CD4-positive, alpha-beta memory T cell (primary cell): ENCODE measurements at regions of chr11 and their contacts with region 1.

Region 1: DNA sequence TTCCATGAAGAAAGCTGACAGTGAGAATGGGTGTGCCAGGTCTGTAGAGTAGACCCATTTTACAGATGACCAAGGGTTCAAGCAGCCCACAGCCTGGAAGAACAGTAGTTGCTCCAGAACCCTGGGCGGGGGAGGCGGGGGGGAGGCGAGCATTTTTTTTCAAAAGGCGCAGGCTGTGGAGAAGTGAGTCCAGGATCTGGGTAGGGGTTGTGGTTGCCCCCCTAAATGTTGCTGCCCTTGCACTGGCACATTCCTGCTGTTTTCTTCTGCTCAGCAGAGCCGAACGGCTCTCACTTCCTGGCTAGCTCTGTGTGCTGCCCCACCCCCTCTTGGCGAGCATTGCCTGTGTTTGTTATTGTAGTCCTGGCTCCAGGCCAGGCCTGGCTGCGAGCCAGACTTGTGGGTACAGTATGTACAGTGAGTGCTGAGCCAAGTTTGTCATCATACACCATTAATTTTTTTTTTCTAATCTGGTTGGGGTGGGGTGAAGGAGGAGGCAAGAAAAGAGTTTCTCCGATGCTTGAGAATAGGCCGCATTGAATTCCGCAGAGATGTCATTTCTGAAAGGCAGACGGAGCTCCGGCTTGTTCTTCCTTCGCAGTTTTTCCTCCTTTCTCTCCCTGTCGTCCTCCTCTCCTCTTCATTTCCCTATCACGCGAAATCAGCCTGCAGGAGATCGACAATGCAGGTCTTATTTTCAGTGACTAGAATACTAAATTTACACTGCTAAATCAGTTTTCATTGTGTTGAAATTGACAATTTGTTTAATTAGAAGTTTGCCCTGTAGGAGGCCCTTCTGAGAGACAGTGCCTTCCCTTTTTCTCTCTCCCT is 100.5 kb downstream of the ZBTB16 start:
- DNase-seq: peak; percentile 97 to 98 (median 98)
- H3K4me3 ChIP-seq: peak overlapping the region in 1 of 2 donors; percentile 26
- H3K4me3 Mint-ChIP-seq: peak overlapping the region; percentile 53 to 86 (median 82)
- H3K27ac ChIP-seq: peak overlapping the region; percentile 33
- H3K27ac Mint-ChIP-seq: peak overlapping the region; percentile 90 to 96 (median 95)
- H3K4me1 ChIP-seq: peaks cover 59% of the 10 kb centered on the region
- H3K4me1 Mint-ChIP-seq: peaks cover 57 to 89% (median 76%) of the 10 kb centered on the region in 4 donors
- H3K27me3 ChIP-seq: no peaks in the 10 kb centered on the region
- H3K27me3 Mint-ChIP-seq: no peaks in the 10 kb centered on the region

Region 2: GRCh38 chr11:113314389-113315301 is 845.4 kb before region 1 on chr11 and contains the start of gene TTC12:
- CTCF ChIA-PET with region 1: no interaction called
- POLR2A ChIA-PET with region 1: no interaction called
- intact Hi-C with region 1: loop called (anchors 10 kb)
- DNase-seq: peak; percentile 87 to 91 (median 89)
- H3K4me3 ChIP-seq: peak within 1 kb of the TSS; percentile 24 to 84
- H3K4me3 Mint-ChIP-seq: peak within 1 kb of the TSS; percentile 79 to 91 (median 88)
- H3K27ac ChIP-seq: peak within 1 kb of the TSS; percentile 85
- H3K27ac Mint-ChIP-seq: peak within 1 kb of the TSS; percentile 79 to 95 (median 94)
- H3K4me1 ChIP-seq: peaks cover 20% of the 10 kb centered on the region
- H3K4me1 Mint-ChIP-seq: peaks cover 27 to 52% (median 38%) of the 10 kb centered on the region in 4 donors
- H3K27me3 ChIP-seq: no peaks in the 10 kb centered on the region
- H3K27me3 Mint-ChIP-seq: no peaks in the 10 kb centered on the region
- total RNA-seq, gene TTC12: 69.2 to 75.1 TPM

Region 3: GRCh38 chr11:113994077-113994954 is 165.7 kb before region 1 on chr11:
- CTCF ChIA-PET with region 1: interaction called, 15 read pairs
- POLR2A ChIA-PET with region 1: no interaction called
- intact Hi-C with region 1: no loop called
- DNase-seq: peak in 4 of 5 donors; percentile 18 to 33 (median 22)
- H3K4me3 ChIP-seq: no peak overlapping the region
- H3K4me3 Mint-ChIP-seq: no peak overlapping the region
- H3K27ac ChIP-seq: no peak overlapping the region
- H3K27ac Mint-ChIP-seq: no peak overlapping the region
- H3K4me1 ChIP-seq: no peaks in the 10 kb centered on the region
- H3K4me1 Mint-ChIP-seq: peaks cover 0 to 1% (median 0%) of the 10 kb centered on the region in 4 donors
- H3K27me3 ChIP-seq: no peaks in the 10 kb centered on the region
- H3K27me3 Mint-ChIP-seq: peaks cover 6 to 13% of the 10 kb centered on the region in 2 donors

Region 4: DNA sequence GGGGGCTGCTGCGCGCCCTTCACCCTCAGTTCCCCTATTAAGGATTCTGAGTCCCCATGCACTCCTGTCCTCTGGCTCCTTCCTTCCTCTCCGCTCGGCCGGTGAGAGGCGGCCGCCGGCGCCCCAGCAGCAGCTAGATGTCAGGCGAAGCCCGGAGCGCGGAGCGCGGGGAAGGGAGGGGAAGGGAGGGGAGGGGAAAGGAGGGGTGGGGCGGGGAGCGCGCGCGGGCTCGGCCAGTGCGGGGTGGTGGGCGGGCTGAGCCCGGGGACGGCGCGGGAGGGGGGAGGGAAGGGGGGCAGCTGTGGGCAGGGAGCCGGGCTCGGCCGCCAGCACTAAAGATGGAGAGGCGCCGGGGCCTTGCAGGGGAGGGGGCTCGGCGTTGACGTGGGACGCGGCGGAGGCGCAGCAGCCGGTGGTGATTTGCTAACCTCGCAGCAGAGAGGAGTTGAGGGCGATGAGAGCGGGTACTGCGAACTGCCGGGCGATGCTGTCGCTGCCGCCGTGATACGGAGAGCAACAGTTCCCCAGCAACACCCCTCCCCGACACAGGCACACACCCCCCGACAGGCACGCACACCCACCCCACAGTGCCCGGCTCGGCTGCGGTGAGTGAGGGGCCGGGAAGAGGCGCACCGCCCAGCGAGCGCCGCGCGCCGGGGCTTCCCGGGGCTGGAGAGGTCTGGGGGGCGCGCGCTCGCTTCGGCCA is 100.6 kb before region 1 on chr11 and contains the start of gene ZBTB16:
- CTCF ChIA-PET with region 1: interaction called, 4 read pairs
- POLR2A ChIA-PET with region 1: interaction called, 25 read pairs
- intact Hi-C with region 1: loop called (anchors 1 kb)
- DNase-seq: peak; percentile 59 to 76 (median 67)
- H3K4me3 ChIP-seq: peak within 1 kb of the TSS; percentile 52 to 57
- H3K4me3 Mint-ChIP-seq: peak within 1 kb of the TSS; percentile 87 to 97 (median 92)
- H3K27ac ChIP-seq: peak within 1 kb of the TSS; percentile 43
- H3K27ac Mint-ChIP-seq: peak within 1 kb of the TSS; percentile 55 to 91 (median 85)
- H3K4me1 ChIP-seq: peaks cover 17% of the 10 kb centered on the region
- H3K4me1 Mint-ChIP-seq: peaks cover 5 to 34% (median 16%) of the 10 kb centered on the region in 4 donors
- H3K27me3 ChIP-seq: peaks cover 16% of the 10 kb centered on the region
- H3K27me3 Mint-ChIP-seq: peaks cover 1 to 8% of the 10 kb centered on the region in 2 donors
- total RNA-seq, gene ZBTB16: 5.6 to 8.2 TPM

Region 5: DNA sequence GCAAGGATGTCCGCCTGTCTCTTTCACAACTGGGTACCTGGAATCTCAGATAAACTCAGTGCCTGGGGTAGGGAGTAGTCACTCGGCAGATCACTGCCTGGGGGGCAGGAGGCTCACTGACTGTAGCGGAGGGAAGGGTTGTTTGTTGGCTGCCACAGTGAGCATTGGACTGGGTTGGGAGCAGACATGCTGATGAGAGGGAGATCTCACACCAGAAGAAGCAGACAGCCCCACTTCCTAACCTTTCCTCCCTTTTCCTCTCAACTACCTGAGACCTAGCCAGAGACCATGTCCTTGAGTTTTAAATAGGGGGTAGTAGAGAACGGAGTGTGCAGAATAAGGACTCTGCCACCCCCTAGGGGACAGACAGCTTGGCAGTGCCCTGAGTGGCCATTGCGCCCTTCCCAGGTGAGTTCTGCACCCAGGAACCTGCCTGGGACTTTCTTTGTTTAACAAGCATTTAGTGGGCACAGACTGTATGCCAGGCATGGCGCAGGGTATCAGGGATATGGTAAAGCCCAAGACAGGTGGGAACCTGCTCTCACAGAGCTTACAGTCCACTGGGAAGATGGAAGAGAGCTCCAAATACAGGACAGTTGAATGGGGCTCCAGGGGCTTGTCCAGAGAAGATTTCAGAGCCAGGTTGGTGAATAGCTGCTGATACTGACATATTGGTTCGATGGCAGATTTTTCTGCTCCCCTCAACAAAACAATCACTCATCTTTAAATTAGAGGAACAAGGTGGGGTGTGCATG is 20.5 kb after region 1 on chr11:
- CTCF ChIA-PET with region 1: interaction called, 106 read pairs
- POLR2A ChIA-PET with region 1: interaction called, 222 read pairs
- intact Hi-C with region 1: loop called (anchors 1 kb)
- DNase-seq: no peak
- H3K4me3 ChIP-seq: no peak overlapping the region
- H3K4me3 Mint-ChIP-seq: peak overlapping the region in 6 of 8 donors; percentile 17 to 60 (median 42)
- H3K27ac ChIP-seq: no peak overlapping the region
- H3K27ac Mint-ChIP-seq: peak overlapping the region in 3 of 7 donors; percentile 53 to 90 (median 79)
- H3K4me1 ChIP-seq: peaks cover 70% of the 10 kb centered on the region
- H3K4me1 Mint-ChIP-seq: peaks cover 60 to 92% (median 77%) of the 10 kb centered on the region in 4 donors
- H3K27me3 ChIP-seq: no peaks in the 10 kb centered on the region
- H3K27me3 Mint-ChIP-seq: no peaks in the 10 kb centered on the region

Region 6: GRCh38 chr11:114257621-114258558 is 97.9 kb after region 1 on chr11:
- CTCF ChIA-PET with region 1: interaction called, 38 read pairs
- POLR2A ChIA-PET with region 1: interaction called, 12 read pairs
- intact Hi-C with region 1: loop called (anchors 1 kb)
- DNase-seq: no peak
- H3K4me3 ChIP-seq: no peak overlapping the region
- H3K4me3 Mint-ChIP-seq: no peak overlapping the region
- H3K27ac ChIP-seq: no peak overlapping the region
- H3K27ac Mint-ChIP-seq: peak overlapping the region in 1 of 7 donors; percentile 32
- H3K4me1 ChIP-seq: no peaks in the 10 kb centered on the region
- H3K4me1 Mint-ChIP-seq: peaks cover 0 to 3% (median 0%) of the 10 kb centered on the region in 4 donors
- H3K27me3 ChIP-seq: no peaks in the 10 kb centered on the region
- H3K27me3 Mint-ChIP-seq: no peaks in the 10 kb centered on the region

Region 7: DNA sequence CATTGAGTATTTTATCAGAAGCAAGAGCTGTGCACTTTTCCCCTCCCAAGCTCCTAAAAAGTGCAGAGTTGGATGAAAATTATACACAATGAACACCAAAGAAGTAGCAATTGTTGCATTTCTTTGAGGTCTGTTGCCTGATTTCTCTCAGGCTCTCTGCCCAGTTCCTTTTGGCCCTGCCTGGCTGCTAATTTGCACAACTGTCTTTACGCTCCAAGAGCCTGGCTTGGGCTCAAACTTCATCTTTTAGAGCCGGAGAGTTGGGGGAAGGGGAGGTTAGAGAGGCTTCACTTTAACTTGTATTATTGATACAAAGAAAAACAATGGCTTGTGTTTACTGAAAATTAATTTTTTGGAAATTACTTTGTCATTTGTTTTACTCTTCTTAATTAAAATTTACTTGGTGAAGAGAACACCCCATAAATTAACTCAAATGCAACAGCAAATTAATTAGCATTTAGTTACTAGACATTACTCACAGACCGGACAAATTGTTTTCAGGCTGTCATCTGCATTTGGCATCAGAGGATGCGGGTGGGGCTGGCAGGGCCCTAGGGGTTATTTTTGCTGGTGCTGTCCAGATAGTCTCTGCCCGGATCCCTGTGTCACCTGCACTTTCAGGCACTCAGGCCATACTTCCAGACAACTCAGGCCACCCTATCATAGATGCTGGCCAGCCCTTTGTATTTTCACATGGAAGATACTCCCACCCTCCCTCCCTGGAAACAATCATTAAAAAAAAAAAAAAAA is 925.6 kb after region 1 on chr11:
- CTCF ChIA-PET with region 1: no interaction called
- POLR2A ChIA-PET with region 1: no interaction called
- intact Hi-C with region 1: no loop called
- DNase-seq: no peak
- H3K4me3 ChIP-seq: no peak overlapping the region
- H3K4me3 Mint-ChIP-seq: no peak overlapping the region
- H3K27ac ChIP-seq: no peak overlapping the region
- H3K27ac Mint-ChIP-seq: no peak overlapping the region
- H3K4me1 ChIP-seq: no peaks in the 10 kb centered on the region
- H3K4me1 Mint-ChIP-seq: no peaks in the 10 kb centered on the region
- H3K27me3 ChIP-seq: no peaks in the 10 kb centered on the region
- H3K27me3 Mint-ChIP-seq: peaks cover 0 to 2% of the 10 kb centered on the region in 2 donors